ENCODE measurements at regions of chr4 and their contacts with region 1.

Region 1: GRCh38 chr4:140523857-140524742 is at the start of gene ELMOD2:
- DNase-seq: peak; percentile 98 to 99
- H3K4me3 ChIP-seq: peak within 1 kb of the TSS; percentile 92 to 96
- H3K27ac ChIP-seq: peak within 1 kb of the TSS; percentile 76
- H3K4me1 ChIP-seq: peaks cover 20% of the 10 kb centered on the region
- H3K27me3 ChIP-seq: no peaks in the 10 kb centered on the region
- CTCF ChIP-seq: peak; percentile 68 to 87 (median 79)
- POLR2A ChIP-seq: peak in 1 of 2 donors; percentile 4
- total RNA-seq, gene ELMOD2: 15.7 TPM

Region 2: DNA sequence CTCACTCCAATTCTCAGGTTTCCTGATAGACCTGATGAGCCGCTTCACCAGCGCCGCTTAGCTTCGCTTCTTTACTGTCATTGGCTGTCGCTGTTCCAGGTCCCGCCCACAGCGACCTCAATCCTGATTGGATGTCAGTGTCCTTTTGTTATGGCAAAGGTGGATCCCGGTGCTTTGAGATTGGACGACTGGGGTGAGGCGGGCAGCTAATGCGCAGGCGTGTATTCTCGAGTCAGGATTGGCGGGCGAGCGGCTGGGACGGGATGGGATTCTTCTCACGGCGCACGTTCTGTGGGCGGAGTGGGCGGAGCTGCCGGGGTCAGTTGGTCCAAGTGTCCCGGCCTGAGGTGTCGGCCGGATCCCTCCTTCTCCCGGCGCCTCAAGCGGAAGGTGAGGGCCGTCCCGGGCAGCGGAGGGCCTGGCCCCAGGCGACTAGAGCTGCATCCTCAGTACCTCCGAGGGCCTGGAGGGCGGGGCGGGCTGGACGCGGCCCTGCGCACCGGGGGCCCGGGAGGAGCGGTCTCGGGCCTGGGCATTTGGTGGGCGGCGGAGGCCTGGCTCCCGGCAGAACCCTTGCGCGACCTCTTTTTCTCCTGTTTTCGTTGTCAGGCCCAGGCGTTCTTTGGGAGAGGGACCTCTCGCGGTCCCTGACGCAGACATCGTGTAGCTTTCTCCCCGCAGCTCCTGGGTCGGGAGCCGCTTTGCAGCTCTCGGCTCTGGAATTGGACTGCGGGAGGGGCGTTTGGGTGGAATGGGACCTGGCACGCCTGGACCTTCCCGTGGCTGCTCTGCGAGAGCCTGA is 150.6 kb before region 1 on chr4 and contains the start of gene SCOC:
- intact Hi-C with region 1: loop called (anchors 10 kb)
- DNase-seq: peak; percentile 99 to 100
- H3K4me3 ChIP-seq: peak within 1 kb of the TSS; percentile 85 to 95
- H3K27ac ChIP-seq: peak within 1 kb of the TSS; percentile 84
- H3K4me1 ChIP-seq: peaks cover 43% of the 10 kb centered on the region
- H3K27me3 ChIP-seq: no peaks in the 10 kb centered on the region
- CTCF ChIP-seq: no peak
- POLR2A ChIP-seq: peak in 1 of 2 donors; percentile 29
- total RNA-seq, gene SCOC: 39.3 TPM